Activated B cell treated with CpG ODN at 0.5 μM for 24 hours (primary cell): ENCODE measurements at regions of chr3 and their contacts with region 1.

Region 1: GRCh38 chr3:188573291-188573940 is 419.5 kb downstream of the LPP start:
- DNase-seq: no peak
- ATAC-seq: peak; percentile 71
- H3K4me3 Mint-ChIP-seq: peak overlapping the region; percentile 39
- H3K27ac Mint-ChIP-seq: peak overlapping the region; percentile 82
- H3K4me1 Mint-ChIP-seq: peaks cover 32% of the 10 kb centered on the region
- H3K27me3 Mint-ChIP-seq: no peaks in the 10 kb centered on the region
- CTCF ChIP-seq: no peak

Region 2: GRCh38 chr3:188526057-188526456 is 47.4 kb before region 1 on chr3:
- CTCF ChIA-PET with region 1: no interaction called
- POLR2A ChIA-PET with region 1: no interaction called
- intact Hi-C with region 1: loop called (anchors 5 kb)
- DNase-seq: no peak
- ATAC-seq: no peak
- H3K4me3 Mint-ChIP-seq: no peak overlapping the region
- H3K27ac Mint-ChIP-seq: no peak overlapping the region
- H3K4me1 Mint-ChIP-seq: peaks cover 15% of the 10 kb centered on the region
- H3K27me3 Mint-ChIP-seq: no peaks in the 10 kb centered on the region
- CTCF ChIP-seq: no peak

Region 3: GRCh38 chr3:188590557-188590956 is 17.1 kb after region 1 on chr3:
- CTCF ChIA-PET with region 1: no interaction called
- POLR2A ChIA-PET with region 1: no interaction called
- intact Hi-C with region 1: no loop called
- DNase-seq: no peak
- ATAC-seq: no peak
- H3K4me3 Mint-ChIP-seq: no peak overlapping the region
- H3K27ac Mint-ChIP-seq: no peak overlapping the region
- H3K4me1 Mint-ChIP-seq: peaks cover 25% of the 10 kb centered on the region
- H3K27me3 Mint-ChIP-seq: no peaks in the 10 kb centered on the region
- CTCF ChIP-seq: no peak

Region 4: GRCh38 chr3:188754267-188754666 is 180.9 kb after region 1 on chr3:
- CTCF ChIA-PET with region 1: no interaction called
- POLR2A ChIA-PET with region 1: interaction called, 12 read pairs
- intact Hi-C with region 1: no loop called
- DNase-seq: no peak
- ATAC-seq: peak; percentile 23
- H3K4me3 Mint-ChIP-seq: peak overlapping the region; percentile 56
- H3K27ac Mint-ChIP-seq: peak overlapping the region; percentile 98
- H3K4me1 Mint-ChIP-seq: peaks cover 70% of the 10 kb centered on the region
- H3K27me3 Mint-ChIP-seq: no peaks in the 10 kb centered on the region
- CTCF ChIP-seq: no peak

Region 5: DNA sequence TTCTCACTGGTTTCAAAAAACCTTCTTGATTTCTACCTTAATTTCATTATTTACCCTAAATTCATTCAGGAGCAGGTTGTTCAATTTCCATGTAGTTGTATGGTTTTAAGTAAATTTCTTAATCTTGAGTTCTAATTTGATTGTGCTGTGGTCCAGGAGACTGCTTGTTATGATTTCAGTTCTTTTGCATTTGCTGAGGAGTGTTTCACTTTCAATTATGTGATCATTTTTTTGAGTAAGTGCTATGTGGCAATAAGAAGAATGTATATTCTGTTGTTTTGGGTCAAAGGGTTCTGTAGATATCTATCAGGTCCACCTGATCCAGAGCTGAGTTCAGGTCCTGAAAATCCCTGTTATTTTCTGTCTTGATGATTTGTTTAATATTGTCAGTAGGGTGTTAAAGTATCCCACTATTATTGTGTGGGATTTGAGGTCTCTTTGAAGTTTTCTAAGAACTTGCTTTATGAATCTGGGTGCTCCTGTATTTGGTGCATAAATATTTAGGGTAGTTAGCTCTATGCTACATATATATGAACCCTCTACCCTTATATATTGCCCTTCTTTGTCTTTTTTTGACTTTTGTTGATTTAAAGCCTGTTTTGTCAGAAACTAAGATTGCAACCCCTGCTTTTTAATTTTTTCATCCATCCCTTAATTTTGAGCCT is 439.9 kb after region 1 on chr3:
- CTCF ChIA-PET with region 1: no interaction called
- POLR2A ChIA-PET with region 1: no interaction called
- intact Hi-C with region 1: no loop called
- DNase-seq: no peak
- ATAC-seq: no peak
- H3K4me3 Mint-ChIP-seq: no peak overlapping the region
- H3K27ac Mint-ChIP-seq: no peak overlapping the region
- H3K4me1 Mint-ChIP-seq: no peaks in the 10 kb centered on the region
- H3K27me3 Mint-ChIP-seq: peaks cover 5% of the 10 kb centered on the region
- CTCF ChIP-seq: no peak